MCF 10A (cell line): ENCODE measurements at regions of chr1 and their contacts with region 1.

Region 1: DNA sequence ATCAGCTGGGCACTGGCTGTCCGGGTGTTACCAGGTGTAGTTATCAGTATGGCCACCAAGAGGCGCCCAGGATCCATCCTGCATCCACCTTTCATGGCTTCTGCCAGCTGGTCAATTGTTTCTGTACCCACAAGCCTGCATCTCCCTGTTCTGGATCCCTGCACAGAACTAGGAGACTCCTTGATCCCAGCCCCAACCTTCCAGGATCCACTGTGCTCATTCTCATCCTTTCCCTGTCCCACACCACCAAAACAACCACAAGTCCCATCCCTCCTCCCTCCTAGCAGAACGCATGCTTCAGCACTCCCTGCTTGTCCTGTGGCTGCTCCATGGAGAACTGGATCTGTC is 27.2 kb upstream of the FOXE3 start:
- DNase-seq: peak; percentile 81
- H3K4me3 Mint-ChIP-seq: no peak overlapping the region
- H3K27ac Mint-ChIP-seq: no peak overlapping the region
- H3K4me1 Mint-ChIP-seq: no peaks in the 10 kb centered on the region
- H3K27me3 Mint-ChIP-seq: no peaks in the 10 kb centered on the region
- CTCF ChIP-seq: peak; percentile 94

Region 2: GRCh38 chr1:47378147-47378546 is 10.7 kb before region 1 on chr1:
- CTCF ChIA-PET with region 1: interaction called, 10 read pairs
- POLR2A ChIA-PET with region 1: interaction called, 4 read pairs
- intact Hi-C with region 1: no loop called
- DNase-seq: no peak
- H3K4me3 Mint-ChIP-seq: no peak overlapping the region
- H3K27ac Mint-ChIP-seq: no peak overlapping the region
- H3K4me1 Mint-ChIP-seq: no peaks in the 10 kb centered on the region
- H3K27me3 Mint-ChIP-seq: no peaks in the 10 kb centered on the region
- CTCF ChIP-seq: no peak

Region 3: GRCh38 chr1:47399138-47399845 is 10.4 kb after region 1 on chr1:
- CTCF ChIA-PET with region 1: interaction called, 61 read pairs
- POLR2A ChIA-PET with region 1: interaction called, 4 read pairs
- intact Hi-C with region 1: no loop called
- DNase-seq: no peak
- H3K4me3 Mint-ChIP-seq: no peak overlapping the region
- H3K27ac Mint-ChIP-seq: no peak overlapping the region
- H3K4me1 Mint-ChIP-seq: no peaks in the 10 kb centered on the region
- H3K27me3 Mint-ChIP-seq: no peaks in the 10 kb centered on the region
- CTCF ChIP-seq: no peak

Region 4: GRCh38 chr1:47409311-47410070 is 20.6 kb after region 1 on chr1:
- CTCF ChIA-PET with region 1: interaction called, 61 read pairs
- POLR2A ChIA-PET with region 1: interaction called, 21 read pairs
- intact Hi-C with region 1: no loop called
- DNase-seq: peak; percentile 83
- H3K4me3 Mint-ChIP-seq: peak overlapping the region; percentile 42
- H3K27ac Mint-ChIP-seq: peak overlapping the region; percentile 68
- H3K4me1 Mint-ChIP-seq: peaks cover 38% of the 10 kb centered on the region
- H3K27me3 Mint-ChIP-seq: no peaks in the 10 kb centered on the region
- CTCF ChIP-seq: no peak

Region 5: DNA sequence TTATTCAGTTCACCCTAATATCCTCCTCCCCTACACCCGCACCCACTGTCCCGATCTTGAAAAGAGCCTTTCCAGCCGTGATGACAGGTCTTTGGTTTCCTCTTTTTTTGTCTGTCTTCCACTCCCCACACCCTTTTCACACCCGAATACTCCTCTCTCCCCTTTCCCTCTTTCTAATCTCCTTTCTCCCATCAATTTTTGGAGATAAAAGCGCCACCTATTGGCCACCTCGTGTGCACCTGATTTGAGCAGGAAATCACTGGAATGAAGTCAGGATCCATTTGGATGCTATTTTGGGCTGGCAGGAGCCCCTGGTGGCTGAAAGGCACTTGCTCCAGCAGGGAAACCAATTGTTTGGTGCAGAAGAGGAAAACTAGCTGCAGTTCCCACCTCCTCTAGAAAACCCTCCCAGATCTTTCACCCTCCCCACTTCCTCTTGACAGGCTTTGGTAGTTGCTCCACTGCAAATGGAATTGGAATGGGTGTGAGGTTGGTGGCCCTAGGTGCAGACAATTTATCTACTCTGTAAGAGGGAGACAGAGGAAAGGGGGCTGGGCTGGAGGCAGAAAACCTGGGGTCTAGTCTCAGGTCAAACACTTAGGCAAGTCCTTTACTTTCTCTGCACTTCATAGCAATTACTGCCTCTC is 35.6 kb after region 1 on chr1:
- CTCF ChIA-PET with region 1: interaction called, 178 read pairs
- POLR2A ChIA-PET with region 1: interaction called, 4 read pairs
- intact Hi-C with region 1: loop called (anchors 1 kb)
- DNase-seq: peak; percentile 81
- H3K4me3 Mint-ChIP-seq: no peak overlapping the region
- H3K27ac Mint-ChIP-seq: no peak overlapping the region
- H3K4me1 Mint-ChIP-seq: peaks cover 11% of the 10 kb centered on the region
- H3K27me3 Mint-ChIP-seq: no peaks in the 10 kb centered on the region
- CTCF ChIP-seq: peak; percentile 68

Region 6: GRCh38 chr1:47710329-47711071 is 321.6 kb after region 1 on chr1:
- CTCF ChIA-PET with region 1: interaction called, 36 read pairs
- POLR2A ChIA-PET with region 1: interaction called, 5 read pairs
- intact Hi-C with region 1: loop called (anchors 2 kb)
- DNase-seq: peak; percentile 47
- H3K4me3 Mint-ChIP-seq: no peak overlapping the region
- H3K27ac Mint-ChIP-seq: no peak overlapping the region
- H3K4me1 Mint-ChIP-seq: no peaks in the 10 kb centered on the region
- H3K27me3 Mint-ChIP-seq: peaks cover 54% of the 10 kb centered on the region
- CTCF ChIP-seq: peak; percentile 99

Region 7: GRCh38 chr1:47720111-47720510 is 331.2 kb after region 1 on chr1:
- CTCF ChIA-PET with region 1: interaction called, 91 read pairs
- POLR2A ChIA-PET with region 1: interaction called, 5 read pairs
- intact Hi-C with region 1: no loop called
- DNase-seq: no peak
- H3K4me3 Mint-ChIP-seq: no peak overlapping the region
- H3K27ac Mint-ChIP-seq: no peak overlapping the region
- H3K4me1 Mint-ChIP-seq: no peaks in the 10 kb centered on the region
- H3K27me3 Mint-ChIP-seq: peaks cover 19% of the 10 kb centered on the region
- CTCF ChIP-seq: no peak